ENCODE measurements at regions of chr19 and their contacts with region 1.

Region 1: GRCh38 chr19:15332311-15332996 is at the start of gene BRD4:
- DNase-seq: peak; percentile 51
- H3K4me3 ChIP-seq: peak within 1 kb of the TSS; percentile 90 to 92
- H3K27ac ChIP-seq: peak within 1 kb of the TSS; percentile 85 to 95
- H3K4me1 ChIP-seq: peaks cover 9% of the 10 kb centered on the region
- H3K27me3 ChIP-seq: no peaks in the 10 kb centered on the region
- CTCF ChIP-seq: no peak
- POLR2A ChIP-seq: no peak
- total RNA-seq, gene BRD4: 45.6 to 76.0 TPM

Region 2: DNA sequence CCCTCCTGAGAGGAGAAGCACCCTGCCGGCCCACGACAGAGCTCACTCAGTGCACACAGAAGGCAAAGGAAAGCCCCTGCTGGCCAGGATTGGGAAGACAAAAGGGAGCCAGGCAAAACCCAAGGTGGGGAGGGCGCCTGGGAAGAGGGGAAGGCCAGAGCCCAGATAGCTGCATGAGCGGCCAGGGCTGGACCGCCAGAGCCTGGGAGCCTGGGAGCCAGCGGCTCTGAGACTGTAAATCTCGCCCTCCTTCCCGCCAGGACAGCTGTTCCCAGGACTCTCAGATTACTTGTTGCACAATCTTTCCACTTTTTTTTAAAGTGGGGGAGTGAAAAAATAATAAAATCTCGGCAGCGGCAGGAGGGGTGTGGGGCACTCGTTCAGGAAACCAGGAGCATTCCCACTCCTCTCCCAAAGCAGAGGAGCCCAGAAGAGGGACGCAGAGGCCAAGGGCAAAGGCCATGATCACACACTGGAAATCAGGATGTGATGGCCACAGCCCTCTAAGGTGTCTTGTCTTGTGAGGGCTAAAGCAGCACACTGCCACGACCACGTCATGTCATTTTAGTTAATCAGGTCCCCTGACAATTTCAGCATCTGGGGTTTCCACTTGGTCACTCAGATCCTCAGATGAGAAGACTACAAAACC is 80.6 kb before region 1 on chr19:
- intact Hi-C with region 1: loop called (anchors 5 kb)
- DNase-seq: peak; percentile 78
- H3K4me3 ChIP-seq: no peak overlapping the region
- H3K27ac ChIP-seq: peak overlapping the region; percentile 73 to 80
- H3K4me1 ChIP-seq: peaks cover 29% of the 10 kb centered on the region
- H3K27me3 ChIP-seq: no peaks in the 10 kb centered on the region
- CTCF ChIP-seq: peak in 2 of 4 experiments; percentile 44
- POLR2A ChIP-seq: no peak

Region 3: DNA sequence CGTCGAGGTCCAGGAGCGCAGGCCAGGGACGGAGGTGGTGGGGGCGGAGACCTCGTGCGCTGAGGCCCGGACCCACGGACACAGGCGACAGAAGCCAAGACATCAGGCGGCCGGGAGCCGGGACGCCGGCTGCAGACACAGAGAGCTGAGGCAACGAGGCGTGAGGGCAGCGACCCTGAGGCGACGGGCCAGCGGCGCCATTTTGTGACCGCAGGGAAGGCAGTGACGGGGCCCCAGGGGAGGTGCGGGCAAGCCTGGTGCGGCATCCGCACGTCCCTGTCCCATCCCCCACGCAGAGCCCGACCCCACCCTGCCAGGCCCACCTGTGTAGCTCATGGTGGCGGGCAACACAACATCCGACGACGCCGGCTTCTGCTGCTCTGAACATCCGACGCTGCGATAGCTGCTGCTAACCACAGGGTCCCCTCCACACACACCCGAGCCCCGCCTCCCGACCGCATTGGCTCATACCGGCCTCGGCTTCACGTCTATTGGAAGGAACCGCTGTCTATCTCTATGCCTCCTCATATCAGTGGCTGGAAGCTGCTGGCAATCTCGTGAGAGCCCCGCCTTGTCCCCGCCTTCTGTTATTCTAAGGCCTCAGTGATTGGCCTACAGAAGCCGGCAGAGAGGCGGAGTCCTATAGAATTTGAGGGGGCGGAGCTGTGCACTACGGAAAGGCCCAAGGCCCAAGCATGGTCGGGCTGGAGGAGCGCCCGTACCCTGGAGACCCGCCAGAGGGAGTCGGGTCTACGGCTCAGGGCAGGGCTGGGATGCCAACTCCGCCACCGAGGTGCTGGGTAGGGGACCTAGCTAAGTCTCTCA is 86.3 kb after region 1 on chr19 and contains the start of gene AKAP8L:
- intact Hi-C with region 1: loop called (anchors 5 kb)
- DNase-seq: peak; percentile 99
- H3K4me3 ChIP-seq: peak within 1 kb of the TSS; percentile 92 to 97
- H3K27ac ChIP-seq: peak within 1 kb of the TSS; percentile 83 to 85
- H3K4me1 ChIP-seq: peaks cover 28% of the 10 kb centered on the region
- H3K27me3 ChIP-seq: no peaks in the 10 kb centered on the region
- CTCF ChIP-seq: peak in 2 of 4 experiments; percentile 73 to 76
- POLR2A ChIP-seq: peak; percentile 83
- total RNA-seq, gene AKAP8L: 107 to 269 TPM